Caco-2 (cell line): ENCODE measurements at regions of chr1 and their contacts with region 1.

Region 1: DNA sequence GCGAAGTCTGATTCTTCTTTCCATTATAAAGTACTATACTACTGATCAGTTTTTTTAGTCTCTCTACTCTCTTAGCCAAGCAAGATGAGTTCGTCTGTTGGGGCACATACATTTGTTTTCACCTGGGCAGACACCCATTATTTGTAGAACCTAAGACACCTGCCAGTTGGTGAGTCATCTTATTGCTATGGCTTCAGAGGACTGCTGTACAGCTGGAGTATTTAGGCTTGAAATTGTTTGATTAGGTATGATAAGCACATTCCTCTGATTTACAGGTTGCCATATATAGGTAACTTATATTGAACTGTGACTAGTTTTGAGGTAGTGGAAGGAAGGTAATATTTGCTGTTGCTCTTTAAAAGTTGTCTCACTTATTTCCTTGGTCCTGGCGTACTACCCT is 17.2 kb downstream of the RBM15 start:
- DNase-seq: peak; percentile 40 to 43
- H3K4me3 ChIP-seq: no peak overlapping the region
- H3K4me3 Mint-ChIP-seq: peak overlapping the region; percentile 5
- H3K27ac Mint-ChIP-seq: peak overlapping the region; percentile 37
- H3K4me1 ChIP-seq: 0 out of 2 replicates have a peak, but pooled peaks cover 4% of the 10 kb centered on the region
- H3K4me1 Mint-ChIP-seq: no peaks in the 10 kb centered on the region
- H3K27me3 ChIP-seq: no peaks in the 10 kb centered on the region
- H3K27me3 Mint-ChIP-seq: no peaks in the 10 kb centered on the region
- CTCF ChIP-seq: no peak

Region 2: GRCh38 chr1:109996476-109996875 is 359.9 kb before region 1 on chr1:
- CTCF ChIA-PET with region 1: no interaction called
- POLR2A ChIA-PET with region 1: no interaction called
- intact Hi-C with region 1: no loop called
- DNase-seq: no peak
- H3K4me3 ChIP-seq: no peak overlapping the region
- H3K4me3 Mint-ChIP-seq: no peak overlapping the region
- H3K27ac Mint-ChIP-seq: no peak overlapping the region
- H3K4me1 ChIP-seq: no peaks in the 10 kb centered on the region
- H3K4me1 Mint-ChIP-seq: no peaks in the 10 kb centered on the region
- H3K27me3 ChIP-seq: no peaks in the 10 kb centered on the region
- H3K27me3 Mint-ChIP-seq: no peaks in the 10 kb centered on the region
- CTCF ChIP-seq: no peak

Region 3: DNA sequence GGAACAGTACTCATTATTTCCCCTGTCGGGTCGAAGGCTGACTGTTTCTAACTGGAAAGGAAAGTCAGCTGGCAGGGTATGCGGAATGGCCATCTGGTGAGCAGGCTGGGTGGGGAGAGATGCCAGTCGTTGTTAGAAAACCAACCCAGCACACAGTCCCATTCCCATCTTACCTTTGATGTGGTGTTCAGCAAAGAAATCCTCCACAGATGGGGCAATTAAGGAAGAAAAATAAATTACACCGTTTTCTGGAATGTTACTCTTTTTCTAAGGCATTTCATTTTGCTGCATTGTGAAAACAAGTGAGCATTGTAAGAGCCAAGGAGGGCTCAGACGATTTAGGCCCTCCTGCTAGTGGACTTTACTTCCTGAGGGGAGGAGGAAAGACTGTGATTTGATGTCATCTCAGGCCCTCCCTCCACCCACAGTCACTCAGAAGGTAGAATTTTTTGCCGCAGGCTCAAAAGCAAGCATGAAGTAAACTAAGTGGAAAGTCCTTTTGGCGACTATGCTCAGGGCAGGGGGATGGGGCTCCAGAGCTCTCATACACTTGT is 34.4 kb after region 1 on chr1 and contains the start of gene SLC16A4:
- CTCF ChIA-PET with region 1: no interaction called
- POLR2A ChIA-PET with region 1: no interaction called
- intact Hi-C with region 1: loop called (anchors 5 kb)
- DNase-seq: peak; percentile 45 to 54
- H3K4me3 ChIP-seq: peak within 1 kb of the TSS; percentile 11; the same call in 1 of the 2 replicates
- H3K4me3 Mint-ChIP-seq: peak within 1 kb of the TSS; percentile 58
- H3K27ac Mint-ChIP-seq: peak within 1 kb of the TSS; percentile 46
- H3K4me1 ChIP-seq: peaks cover 47% of the 10 kb centered on the region
- H3K4me1 Mint-ChIP-seq: peaks cover 19% of the 10 kb centered on the region
- H3K27me3 ChIP-seq: no peaks in the 10 kb centered on the region
- H3K27me3 Mint-ChIP-seq: no peaks in the 10 kb centered on the region
- CTCF ChIP-seq: no peak
- total RNA-seq, gene SLC16A4: 7.6 and 9.3 TPM in 2 replicates